H1 (cell line): ENCODE measurements at regions of chr14 and their contacts with region 1.

Region 1: GRCh38 chr14:31090883-31091764 is 64.9 kb upstream of the STRN3 start:
- DNase-seq: no peak
- H3K4me3 ChIP-seq: no peak overlapping the region
- H3K27ac ChIP-seq: no peak overlapping the region
- H3K4me1 ChIP-seq: no peaks in the 10 kb centered on the region
- H3K27me3 ChIP-seq: no peaks in the 10 kb centered on the region
- CTCF ChIP-seq: no peak
- EP300 ChIP-seq: no peak
- POLR2A ChIP-seq: no peak
- RAD21 ChIP-seq: no peak

Region 2: DNA sequence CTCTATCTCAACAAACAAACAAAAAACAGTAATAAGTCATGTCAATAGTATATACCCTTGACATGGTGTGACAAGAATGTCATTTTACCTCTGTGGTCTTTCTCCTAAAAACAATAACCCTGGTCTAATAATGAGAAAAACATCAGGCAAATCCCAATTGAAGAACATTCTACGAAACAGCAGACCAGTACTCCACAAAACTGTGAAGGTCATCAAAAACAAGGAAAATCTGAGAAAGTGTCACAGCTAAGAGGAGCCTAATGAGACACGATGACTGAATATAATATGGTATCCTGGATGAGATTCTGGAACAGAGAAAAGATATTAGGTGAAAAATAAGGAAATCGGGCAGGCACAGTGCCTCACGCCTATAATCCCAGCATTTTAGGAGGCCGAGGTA is 222.4 kb before region 1 on chr14:
- CTCF ChIA-PET with region 1: no interaction called
- POLR2A ChIA-PET with region 1: no interaction called
- DNase-seq: no peak
- H3K4me3 ChIP-seq: no peak overlapping the region
- H3K27ac ChIP-seq: no peak overlapping the region
- H3K4me1 ChIP-seq: peaks cover 0 to 12% (median 8%) of the 10 kb centered on the region in 4 experiments; a peak in 5 of 7 replicates
- H3K27me3 ChIP-seq: peaks cover 2 to 9% (median 6%) of the 10 kb centered on the region in 4 experiments
- CTCF ChIP-seq: no peak
- EP300 ChIP-seq: no peak
- POLR2A ChIP-seq: no peak
- RAD21 ChIP-seq: no peak

Region 3: DNA sequence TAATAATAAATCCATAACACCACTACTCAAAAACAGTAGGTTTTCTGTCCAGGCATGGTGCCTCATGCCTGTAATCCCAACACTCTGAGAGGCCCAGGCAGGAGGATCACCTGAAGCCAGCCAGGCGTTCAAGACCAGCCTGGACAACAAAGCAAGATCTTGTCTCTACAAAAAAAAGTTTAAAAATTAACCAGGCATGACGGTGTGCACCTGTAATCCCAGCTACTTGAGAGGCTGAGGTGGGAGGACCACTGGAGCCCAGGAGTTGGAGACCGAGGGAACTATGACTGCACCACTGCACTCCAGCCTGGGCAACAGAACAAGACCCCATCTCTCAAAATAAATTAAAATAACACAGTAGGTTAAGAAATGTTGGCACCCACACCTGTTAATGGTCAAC is 110.1 kb before region 1 on chr14:
- CTCF ChIA-PET with region 1: interaction called, 18 read pairs
- POLR2A ChIA-PET with region 1: no interaction called
- DNase-seq: no peak
- H3K4me3 ChIP-seq: no peak overlapping the region
- H3K27ac ChIP-seq: no peak overlapping the region
- H3K4me1 ChIP-seq: no peaks in the 10 kb centered on the region
- H3K27me3 ChIP-seq: no peaks in the 10 kb centered on the region
- CTCF ChIP-seq: no peak
- EP300 ChIP-seq: no peak
- POLR2A ChIP-seq: no peak
- RAD21 ChIP-seq: no peak

Region 4: GRCh38 chr14:31142455-31143087 is 51.4 kb after region 1 on chr14:
- CTCF ChIA-PET with region 1: no interaction called
- POLR2A ChIA-PET with region 1: no interaction called
- DNase-seq: no peak
- H3K4me3 ChIP-seq: no peak overlapping the region
- H3K27ac ChIP-seq: no peak overlapping the region
- H3K4me1 ChIP-seq: no peaks in the 10 kb centered on the region
- H3K27me3 ChIP-seq: no peaks in the 10 kb centered on the region
- CTCF ChIP-seq: no peak
- EP300 ChIP-seq: no peak
- POLR2A ChIP-seq: no peak
- RAD21 ChIP-seq: no peak